T-cell (primary cell): ENCODE measurements at regions of chr7 and their contacts with region 1.

Region 1: GRCh38 chr7:95476904-95477594 is 8.7 kb upstream of the ASB4 start:
- DNase-seq: peak in 32 of 35 experiments; percentile 8 to 75 (median 34)
- ATAC-seq: peak in 3 of 4 experiments; percentile 45 to 65 (median 60)
- H3K4me3 ChIP-seq: no peak overlapping the region
- H3K4me3 Mint-ChIP-seq: no peak overlapping the region
- H3K27ac ChIP-seq: no peak overlapping the region
- H3K27ac Mint-ChIP-seq: no peak overlapping the region
- H3K4me1 ChIP-seq: no peaks in the 10 kb centered on the region
- H3K4me1 Mint-ChIP-seq: no peaks in the 10 kb centered on the region
- H3K27me3 ChIP-seq: no peaks in the 10 kb centered on the region
- H3K27me3 Mint-ChIP-seq: peaks cover 0 to 1% of the 10 kb centered on the region in 2 donors

Region 2: GRCh38 chr7:94701555-94701973 is 775.5 kb before region 1 on chr7:
- CTCF ChIA-PET with region 1: no interaction called
- POLR2A ChIA-PET with region 1: no interaction called
- DNase-seq: no peak
- ATAC-seq: no peak
- H3K4me3 ChIP-seq: no peak overlapping the region
- H3K4me3 Mint-ChIP-seq: no peak overlapping the region
- H3K27ac ChIP-seq: no peak overlapping the region
- H3K27ac Mint-ChIP-seq: no peak overlapping the region
- H3K4me1 ChIP-seq: no peaks in the 10 kb centered on the region
- H3K4me1 Mint-ChIP-seq: no peaks in the 10 kb centered on the region
- H3K27me3 ChIP-seq: no peaks in the 10 kb centered on the region
- H3K27me3 Mint-ChIP-seq: peaks cover 0 to 6% of the 10 kb centered on the region in 2 donors

Region 3: DNA sequence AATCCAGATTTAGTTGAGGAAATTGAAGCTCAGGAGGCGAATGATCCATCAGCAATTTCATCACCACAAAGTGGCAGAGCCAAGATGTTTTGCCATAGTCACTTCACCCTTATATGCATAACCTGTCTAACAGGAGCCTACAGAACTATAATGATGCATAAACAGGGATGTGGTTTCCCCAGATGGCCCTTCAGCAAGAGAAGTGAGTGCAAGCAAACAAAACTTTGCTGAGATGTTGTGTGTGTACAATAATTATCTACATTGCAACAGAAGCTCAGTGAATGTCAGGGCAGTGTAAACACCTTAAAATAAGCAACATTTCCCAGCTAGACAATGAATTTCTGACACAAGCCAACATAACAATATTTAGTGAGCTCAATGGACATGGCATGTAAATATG is 109.4 kb before region 1 on chr7:
- CTCF ChIA-PET with region 1: no interaction called
- POLR2A ChIA-PET with region 1: no interaction called
- DNase-seq: no peak
- ATAC-seq: no peak
- H3K4me3 ChIP-seq: no peak overlapping the region
- H3K4me3 Mint-ChIP-seq: no peak overlapping the region
- H3K27ac ChIP-seq: no peak overlapping the region
- H3K27ac Mint-ChIP-seq: no peak overlapping the region
- H3K4me1 ChIP-seq: no peaks in the 10 kb centered on the region
- H3K4me1 Mint-ChIP-seq: no peaks in the 10 kb centered on the region
- H3K27me3 ChIP-seq: peaks cover 0 to 2% of the 10 kb centered on the region in 2 experiments
- H3K27me3 Mint-ChIP-seq: peaks cover 3 to 5% of the 10 kb centered on the region in 2 donors

Region 4: GRCh38 chr7:95457947-95458346 is 19.1 kb before region 1 on chr7:
- CTCF ChIA-PET with region 1: interaction called in 1 of 2 experiments, 14 read pairs
- POLR2A ChIA-PET with region 1: no interaction called
- DNase-seq: no peak
- ATAC-seq: no peak
- H3K4me3 ChIP-seq: no peak overlapping the region
- H3K4me3 Mint-ChIP-seq: no peak overlapping the region
- H3K27ac ChIP-seq: no peak overlapping the region
- H3K27ac Mint-ChIP-seq: no peak overlapping the region
- H3K4me1 ChIP-seq: no peaks in the 10 kb centered on the region
- H3K4me1 Mint-ChIP-seq: no peaks in the 10 kb centered on the region
- H3K27me3 ChIP-seq: peaks cover 0 to 6% of the 10 kb centered on the region in 2 experiments
- H3K27me3 Mint-ChIP-seq: peaks cover 15 to 22% of the 10 kb centered on the region in 2 donors